Heart left ventricle (tissue), 16 donors: ENCODE measurements at regions of chr1 and their contacts with region 1.

Region 1: DNA sequence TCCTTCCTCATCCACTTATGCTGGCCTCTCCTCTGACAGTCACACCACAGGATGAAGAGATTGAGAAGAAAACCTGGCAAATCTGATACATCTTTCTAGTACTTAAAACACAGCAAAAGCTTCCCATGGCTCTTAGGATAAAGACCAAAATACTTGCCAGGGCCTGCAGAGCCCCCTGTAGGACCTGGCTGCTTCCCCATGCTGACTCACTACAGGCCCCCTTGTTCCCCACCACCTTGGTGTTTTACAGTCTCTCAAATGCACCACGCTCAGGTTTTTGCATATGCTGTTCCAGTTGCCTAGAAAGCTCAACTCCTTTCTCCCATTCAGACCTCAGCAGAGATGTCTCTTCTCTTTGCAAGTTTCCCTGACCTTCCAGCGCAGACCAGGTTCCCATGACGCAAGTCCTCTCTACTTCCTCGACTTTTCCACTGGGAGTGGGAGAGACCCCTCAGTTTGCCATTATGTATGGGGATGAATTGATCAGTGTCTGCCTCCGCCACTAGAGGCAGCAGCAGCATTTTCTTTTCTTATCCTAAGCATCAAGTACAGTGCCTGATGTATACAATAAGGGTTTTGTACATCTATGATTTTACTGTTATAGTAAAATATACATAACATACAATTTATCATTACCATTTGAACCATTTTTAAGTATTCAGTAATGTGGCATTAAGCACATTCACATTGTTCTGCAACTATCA is 113.8 kb upstream of the C8B start:
- DNase-seq: no peak
- ATAC-seq: no peak
- H3K4me3 ChIP-seq: no peak overlapping the region
- H3K27ac ChIP-seq: no peak overlapping the region
- H3K4me1 ChIP-seq: peaks cover 0 to 24% (median 15%) of the 10 kb centered on the region in 12 donors
- H3K27me3 ChIP-seq: no peaks in the 10 kb centered on the region
- CTCF ChIP-seq: peak in 6 of 12 donors; percentile 17 to 28 (median 20)
- POLR2A ChIP-seq: no peak

Region 2: DNA sequence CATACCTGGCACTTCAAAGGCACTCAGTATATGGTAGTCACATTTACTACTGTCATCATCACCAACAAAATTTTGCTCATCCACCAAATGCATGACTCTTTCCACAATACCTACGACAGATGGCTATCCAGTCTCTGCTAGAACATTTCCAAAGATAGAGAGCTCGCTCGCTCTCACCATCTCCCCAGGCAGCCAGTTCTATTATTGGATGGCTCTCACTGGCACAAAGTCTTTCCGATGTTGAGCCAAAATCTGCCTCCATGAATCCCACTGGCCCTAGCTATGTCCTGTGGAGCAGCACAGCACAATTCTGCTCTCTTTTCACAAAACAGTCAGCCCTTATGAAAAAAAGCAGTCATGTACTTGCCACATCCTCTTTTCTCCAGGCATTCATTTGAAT is 242.2 kb after region 1 on chr1:
- intact Hi-C with region 1: loop called in 1 of 10 experiments (anchors 10 kb)
- DNase-seq: no peak
- ATAC-seq: peak; percentile 51 to 74 (median 68)
- H3K4me3 ChIP-seq: no peak overlapping the region
- H3K27ac ChIP-seq: no peak overlapping the region
- H3K4me1 ChIP-seq: peaks cover 0 to 16% (median 0%) of the 10 kb centered on the region in 12 donors
- H3K27me3 ChIP-seq: no peaks in the 10 kb centered on the region
- CTCF ChIP-seq: no peak
- POLR2A ChIP-seq: no peak